CD4-positive, alpha-beta T cell (primary cell): ENCODE measurements at regions of chr1 and their contacts with region 1.

Region 1: DNA sequence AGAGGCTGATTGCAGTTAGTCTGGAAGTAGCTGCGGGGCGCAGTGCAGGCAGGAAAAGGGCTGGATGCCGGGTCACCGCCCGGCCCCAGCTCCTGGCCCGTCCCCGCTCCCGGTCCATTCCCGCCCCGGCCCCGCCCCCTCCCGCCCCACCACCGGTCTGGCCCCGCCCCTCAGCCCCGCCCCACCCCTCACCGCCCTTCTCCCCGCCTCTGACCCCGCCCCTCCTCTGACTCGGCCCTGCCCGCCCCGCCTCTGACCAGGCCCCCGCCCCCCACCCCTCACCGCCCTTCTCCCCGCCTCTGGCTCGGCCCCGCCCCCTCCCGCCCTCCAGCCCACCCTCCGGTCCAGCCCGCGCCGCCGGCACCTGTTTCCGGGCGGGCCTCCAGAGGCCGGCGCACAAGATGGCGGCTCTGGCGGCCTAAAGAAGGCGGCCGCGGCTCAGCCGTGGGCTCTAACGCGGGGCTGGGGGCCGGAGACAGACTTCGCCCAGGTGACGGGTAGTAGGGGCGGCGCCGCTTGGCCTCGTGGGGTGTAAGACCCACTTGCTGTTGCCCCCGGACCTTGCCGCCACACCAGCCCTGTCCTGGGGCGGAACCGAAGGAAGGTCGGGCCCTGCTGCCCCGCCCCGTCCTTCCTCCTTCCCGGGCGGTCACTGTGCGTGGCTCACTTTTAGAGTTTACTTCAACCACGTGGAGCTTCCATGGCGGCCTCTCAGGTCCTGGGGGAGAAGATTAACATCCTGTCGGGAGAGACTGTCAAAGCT is at the start of gene UBIAD1:
- DNase-seq: peak; percentile 75 to 94 (median 86)
- ATAC-seq: peak; percentile 73
- H3K4me3 ChIP-seq: peak within 1 kb of the TSS; percentile 99
- H3K4me3 Mint-ChIP-seq: peak within 1 kb of the TSS; percentile 82
- H3K27ac ChIP-seq: peak within 1 kb of the TSS; percentile 88 to 90
- H3K27ac Mint-ChIP-seq: peak within 1 kb of the TSS; percentile 70
- H3K4me1 ChIP-seq: peaks cover 42% of the 10 kb centered on the region
- H3K4me1 Mint-ChIP-seq: peaks cover 28% of the 10 kb centered on the region
- H3K27me3 ChIP-seq: no peaks in the 10 kb centered on the region
- H3K27me3 Mint-ChIP-seq: no peaks in the 10 kb centered on the region
- CTCF ChIP-seq: no peak
- total RNA-seq, gene UBIAD1: 19.2 to 19.3 TPM

Region 2: DNA sequence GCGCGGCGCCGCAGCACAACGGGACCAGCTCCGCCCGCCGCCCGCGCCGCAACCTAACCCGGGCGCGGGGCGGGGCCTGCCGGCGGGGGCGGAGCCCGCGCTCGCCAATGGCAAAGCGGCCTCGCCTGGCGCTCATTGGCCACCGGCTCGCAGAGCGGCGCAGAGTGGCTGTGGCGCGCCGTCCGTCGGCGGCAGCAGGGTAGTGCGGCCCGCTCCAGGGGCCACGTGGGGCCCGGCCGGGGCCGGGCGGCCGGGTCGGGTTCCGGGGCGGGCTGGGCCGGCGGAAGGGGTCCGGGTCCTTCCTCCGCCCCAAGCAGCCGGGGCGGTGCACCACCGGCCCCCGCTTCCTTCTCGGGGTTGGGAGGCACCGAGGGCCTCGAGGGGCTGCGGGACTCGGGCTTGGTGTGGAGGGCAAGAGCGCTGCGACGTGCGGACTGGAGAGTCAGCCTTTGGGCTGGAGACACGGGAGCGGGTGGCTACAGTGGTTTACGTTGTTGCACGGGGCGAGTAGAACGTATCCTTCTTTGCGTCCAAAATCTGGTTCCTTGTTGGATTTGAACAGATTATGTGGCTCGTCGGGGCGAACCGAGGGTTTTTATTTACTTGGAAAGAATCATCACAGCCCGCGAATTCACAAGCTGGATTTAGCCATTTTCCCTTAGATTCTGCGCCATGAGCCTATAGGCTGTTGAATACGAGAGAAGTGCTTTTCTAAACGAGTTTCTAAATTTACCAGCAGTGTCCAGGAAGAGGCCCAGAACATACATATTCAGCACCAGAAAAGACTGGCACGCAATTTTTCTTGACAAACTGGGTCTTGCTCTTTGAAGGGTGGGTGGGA is 212.8 kb before region 1 on chr1 and contains the start of gene SRM:
- CTCF ChIA-PET with region 1: no interaction called
- POLR2A ChIA-PET with region 1: no interaction called
- intact Hi-C with region 1: loop called in 1 of 2 experiments (anchors 5 kb)
- DNase-seq: peak; percentile 76 to 96 (median 89)
- ATAC-seq: peak; percentile 96
- H3K4me3 ChIP-seq: peak within 1 kb of the TSS; percentile 76
- H3K4me3 Mint-ChIP-seq: peak within 1 kb of the TSS; percentile 96
- H3K27ac ChIP-seq: peak within 1 kb of the TSS; percentile 25 to 57
- H3K27ac Mint-ChIP-seq: peak within 1 kb of the TSS; percentile 77
- H3K4me1 ChIP-seq: peaks cover 32% of the 10 kb centered on the region
- H3K4me1 Mint-ChIP-seq: peaks cover 39% of the 10 kb centered on the region
- H3K27me3 ChIP-seq: no peaks in the 10 kb centered on the region
- H3K27me3 Mint-ChIP-seq: no peaks in the 10 kb centered on the region
- CTCF ChIP-seq: no peak
- total RNA-seq, gene SRM: 21.2 to 24.8 TPM

Region 3: DNA sequence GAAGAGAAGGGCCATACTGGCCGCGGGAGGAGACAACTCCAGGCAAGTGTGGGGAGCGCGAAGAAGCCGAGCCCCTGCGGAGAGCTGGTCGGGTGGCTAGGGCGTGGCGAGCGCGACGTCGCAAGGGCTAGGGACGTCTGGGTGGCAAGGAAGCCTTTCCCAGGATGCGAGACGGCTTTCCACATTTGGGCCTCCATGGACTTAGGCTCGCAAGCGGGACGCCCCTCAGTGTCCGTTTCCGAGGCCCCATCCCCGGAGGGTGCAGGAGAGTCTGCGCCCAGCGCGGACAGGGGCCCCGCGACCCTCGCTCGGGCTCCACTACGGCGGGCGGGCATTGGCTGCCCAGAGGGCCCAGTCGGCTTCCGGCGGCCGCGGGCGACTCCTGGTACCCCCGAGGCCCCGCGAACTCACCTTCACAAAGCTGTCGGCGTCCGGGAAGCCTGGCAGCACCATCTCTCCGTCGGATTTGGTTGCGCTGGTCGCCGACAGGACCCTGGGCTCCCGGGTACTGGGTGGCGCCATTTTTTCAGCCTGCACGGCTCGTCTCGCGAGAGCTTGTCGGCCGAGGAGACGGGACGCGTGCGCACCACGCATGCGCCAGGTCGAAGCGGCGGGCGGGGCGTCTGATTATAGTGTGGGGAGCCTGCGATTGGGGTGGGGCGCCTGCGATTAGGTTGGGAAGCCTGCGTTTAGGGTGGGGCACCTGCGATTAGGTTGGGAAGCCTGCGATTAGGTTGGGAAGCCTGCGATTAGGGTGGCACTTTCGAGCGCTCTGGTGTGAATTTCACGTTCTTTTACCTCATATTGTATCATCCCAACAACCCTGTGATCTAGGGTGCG is 173.5 kb before region 1 on chr1 and contains the start of gene EXOSC10:
- CTCF ChIA-PET with region 1: no interaction called
- POLR2A ChIA-PET with region 1: no interaction called
- intact Hi-C with region 1: loop called in 1 of 2 experiments (anchors 5 kb)
- DNase-seq: peak; percentile 90 to 97 (median 94)
- ATAC-seq: peak; percentile 98
- H3K4me3 ChIP-seq: peak within 1 kb of the TSS; percentile 92
- H3K4me3 Mint-ChIP-seq: peak within 1 kb of the TSS; percentile 99
- H3K27ac ChIP-seq: peak within 1 kb of the TSS; percentile 50 to 66
- H3K27ac Mint-ChIP-seq: peak within 1 kb of the TSS; percentile 93
- H3K4me1 ChIP-seq: peaks cover 12% of the 10 kb centered on the region
- H3K4me1 Mint-ChIP-seq: peaks cover 21% of the 10 kb centered on the region
- H3K27me3 ChIP-seq: no peaks in the 10 kb centered on the region
- H3K27me3 Mint-ChIP-seq: no peaks in the 10 kb centered on the region
- CTCF ChIP-seq: no peak
- total RNA-seq, gene EXOSC10: 81.6 to 89.0 TPM

Region 4: DNA sequence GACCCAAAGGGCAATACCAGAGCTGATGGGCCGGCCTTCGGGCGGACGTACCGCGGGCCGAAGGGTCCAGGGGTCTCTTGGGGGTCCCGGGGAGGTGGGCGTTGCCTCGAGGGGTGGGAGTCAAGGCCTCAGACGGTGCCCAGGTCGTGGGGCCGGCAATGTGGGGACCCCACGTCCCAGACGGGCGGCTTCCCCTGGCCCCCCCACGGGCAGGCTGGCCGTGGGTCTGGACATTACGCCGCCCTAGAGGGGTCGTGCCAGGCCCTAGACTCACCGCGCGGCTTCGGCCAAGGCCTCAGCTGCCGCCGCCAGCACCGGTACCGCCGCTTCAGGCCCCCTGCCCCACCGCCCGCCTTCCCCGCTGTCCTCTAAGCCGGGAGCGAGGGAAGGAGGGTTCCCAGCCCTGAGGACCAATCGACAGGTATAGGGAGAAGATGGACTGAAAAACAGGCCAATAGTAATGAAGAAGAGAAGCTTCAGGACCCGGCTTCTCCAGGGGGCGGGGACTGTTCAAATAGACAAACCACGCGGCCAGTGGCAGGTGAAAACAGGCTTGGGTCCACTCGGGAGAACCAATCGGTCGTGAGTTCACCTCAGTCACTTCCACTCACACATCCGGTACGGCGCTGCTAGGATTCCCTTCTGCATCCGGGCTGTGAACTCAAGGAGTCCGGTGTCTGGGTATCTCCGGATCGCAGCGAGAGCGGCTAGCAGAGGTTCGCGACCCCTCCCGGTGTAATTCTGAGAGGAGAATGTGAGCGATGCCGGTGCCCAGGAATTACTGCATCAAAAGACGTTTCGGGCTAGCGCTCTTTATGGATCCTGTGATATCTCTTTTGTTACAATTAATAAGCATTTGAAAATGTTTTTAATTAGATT is 10.6 kb before region 1 on chr1 and contains the start of gene MTOR:
- CTCF ChIA-PET with region 1: interaction called, 10 read pairs
- POLR2A ChIA-PET with region 1: interaction called, 46 read pairs
- intact Hi-C with region 1: loop called in 1 of 2 experiments (anchors 1 kb)
- DNase-seq: peak; percentile 89 to 99 (median 94)
- ATAC-seq: peak; percentile 95
- H3K4me3 ChIP-seq: peak within 1 kb of the TSS; percentile 98
- H3K4me3 Mint-ChIP-seq: peak within 1 kb of the TSS; percentile 94
- H3K27ac ChIP-seq: peak within 1 kb of the TSS; percentile 50 to 69
- H3K27ac Mint-ChIP-seq: peak within 1 kb of the TSS; percentile 89
- H3K4me1 ChIP-seq: peaks cover 22% of the 10 kb centered on the region
- H3K4me1 Mint-ChIP-seq: peaks cover 22% of the 10 kb centered on the region
- H3K27me3 ChIP-seq: no peaks in the 10 kb centered on the region
- H3K27me3 Mint-ChIP-seq: no peaks in the 10 kb centered on the region
- CTCF ChIP-seq: no peak
- total RNA-seq, gene MTOR: 27.3 to 28.9 TPM

Region 5: DNA sequence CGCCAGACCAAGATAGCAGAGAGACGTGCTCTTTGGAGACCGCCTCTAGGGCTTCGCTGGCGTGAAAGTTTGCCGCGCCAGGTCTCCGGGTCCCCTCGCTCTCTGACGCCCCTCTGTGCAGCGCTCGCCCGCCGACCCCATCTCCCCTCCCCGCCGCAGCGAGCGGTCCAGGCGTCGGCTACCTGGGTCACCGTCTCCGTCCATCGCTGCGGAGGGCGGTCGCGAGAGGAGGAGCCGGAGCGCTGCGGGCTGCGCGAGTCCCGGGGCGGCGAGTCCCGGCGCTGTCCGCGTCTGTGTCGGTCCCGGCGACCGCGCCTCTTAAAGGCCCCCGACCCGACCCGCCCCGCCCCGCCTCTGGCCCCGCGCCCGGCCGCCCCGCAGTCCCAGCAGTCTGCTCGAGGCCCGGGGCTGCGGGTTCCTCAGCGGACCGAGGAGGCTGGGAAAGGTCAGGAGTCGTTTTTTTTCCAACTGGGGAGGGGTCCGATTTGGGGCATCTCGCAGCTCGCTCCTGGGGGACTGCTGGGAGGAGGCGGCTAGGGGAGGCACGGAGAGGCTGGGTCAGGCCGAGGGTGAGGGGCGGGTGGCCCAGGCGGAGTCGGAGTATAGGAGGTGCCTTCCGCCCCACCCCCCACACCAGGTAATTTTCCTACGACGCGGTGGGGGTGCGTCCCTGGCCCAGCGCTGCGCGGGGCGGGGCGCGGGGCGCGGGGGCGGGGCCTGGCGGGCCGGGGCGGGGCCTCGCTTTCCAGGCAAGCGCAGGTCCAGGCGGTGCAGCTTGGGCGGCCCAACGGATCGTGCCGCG is 381.3 kb after region 1 on chr1 and contains the starts of genes FBXO2 and FBXO44:
- CTCF ChIA-PET with region 1: no interaction called
- POLR2A ChIA-PET with region 1: no interaction called
- intact Hi-C with region 1: loop called in 1 of 2 experiments (anchors 1 kb)
- DNase-seq: peak; percentile 44 to 83 (median 66)
- ATAC-seq: peak; percentile 76
- H3K4me3 ChIP-seq: peak within 1 kb of the TSS; percentile 69
- H3K4me3 Mint-ChIP-seq: peak within 1 kb of the TSS; percentile 83
- H3K27ac ChIP-seq: no peak within 1 kb of the TSS
- H3K27ac Mint-ChIP-seq: peak within 1 kb of the TSS; percentile 51
- H3K4me1 ChIP-seq: peaks cover 51% of the 10 kb centered on the region
- H3K4me1 Mint-ChIP-seq: peaks cover 44% of the 10 kb centered on the region
- H3K27me3 ChIP-seq: no peaks in the 10 kb centered on the region
- H3K27me3 Mint-ChIP-seq: no peaks in the 10 kb centered on the region
- CTCF ChIP-seq: no peak
- total RNA-seq, gene FBXO2: 3.2 to 3.7 TPM
- total RNA-seq, gene FBXO44: 44.9 to 48.4 TPM

Region 6: DNA sequence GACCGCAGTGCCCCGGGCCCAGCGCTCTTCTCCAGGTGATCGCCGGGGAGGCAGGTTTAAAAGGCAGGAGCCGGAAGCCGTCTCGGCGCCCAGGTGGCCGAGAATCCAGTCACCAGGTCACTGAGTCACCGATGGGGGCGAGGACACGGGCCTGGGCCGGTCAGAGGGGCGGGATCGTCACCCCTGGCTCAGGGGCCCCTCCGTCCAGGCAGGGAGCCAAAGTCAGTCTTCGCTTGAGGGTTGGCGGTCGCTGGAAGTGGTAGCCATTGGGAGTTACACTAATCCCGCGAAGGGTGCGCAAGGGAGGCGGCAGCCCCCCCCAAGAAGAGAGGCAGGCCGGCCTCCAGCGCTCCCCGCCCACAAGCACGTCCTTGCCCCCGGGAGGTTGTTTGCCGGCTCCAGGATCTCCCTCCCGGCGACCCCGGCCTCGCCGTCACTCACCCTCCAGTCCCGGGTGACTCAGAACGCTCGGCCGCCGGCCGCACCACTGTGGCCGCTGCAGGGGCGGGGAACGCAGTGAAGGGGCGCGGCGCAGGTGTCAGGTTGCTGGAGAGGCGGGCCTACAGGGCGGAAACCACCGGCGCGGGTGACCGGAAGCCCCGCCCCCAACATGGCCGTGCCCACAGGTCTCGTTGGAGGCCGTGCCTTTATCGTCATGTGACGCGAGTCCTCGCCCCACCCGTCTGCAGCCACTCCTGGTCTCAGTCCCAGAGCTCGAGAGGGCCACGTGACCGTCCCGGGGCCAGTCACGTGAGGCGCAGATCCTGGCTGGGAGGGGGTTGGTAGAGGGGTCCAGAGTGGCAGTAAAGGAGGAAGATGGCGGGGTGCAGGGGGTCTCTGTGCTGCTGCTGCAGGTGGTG is 532.7 kb after region 1 on chr1 and contains the starts of genes CLCN6 and MTHFR:
- CTCF ChIA-PET with region 1: no interaction called
- POLR2A ChIA-PET with region 1: no interaction called
- intact Hi-C with region 1: loop called in 1 of 2 experiments (anchors 5 kb)
- DNase-seq: peak; percentile 93 to 99 (median 97)
- ATAC-seq: peak; percentile 85
- H3K4me3 ChIP-seq: peak within 1 kb of the TSS; percentile 98
- H3K4me3 Mint-ChIP-seq: peak within 1 kb of the TSS; percentile 99
- H3K27ac ChIP-seq: peak within 1 kb of the TSS; percentile 86 to 92
- H3K27ac Mint-ChIP-seq: peak within 1 kb of the TSS; percentile 91
- H3K4me1 ChIP-seq: peaks cover 58% of the 10 kb centered on the region
- H3K4me1 Mint-ChIP-seq: peaks cover 66% of the 10 kb centered on the region
- H3K27me3 ChIP-seq: no peaks in the 10 kb centered on the region
- H3K27me3 Mint-ChIP-seq: no peaks in the 10 kb centered on the region
- CTCF ChIP-seq: no peak
- total RNA-seq, gene CLCN6: 10.9 to 11.2 TPM
- total RNA-seq, gene MTHFR: 30.8 to 31.3 TPM